OCI-LY7 (cell line): ENCODE measurements at regions of chr1 and their contacts with region 1.

Region 1: GRCh38 chr1:234326497-234327366 is 46.5 kb upstream of the COA6 start:
- DNase-seq: peak; percentile 58
- H3K4me3 ChIP-seq: no peak overlapping the region
- H3K27ac ChIP-seq: no peak overlapping the region
- H3K4me1 ChIP-seq: peaks cover 16% of the 10 kb centered on the region
- CTCF ChIP-seq: peak; percentile 89

Region 2: DNA sequence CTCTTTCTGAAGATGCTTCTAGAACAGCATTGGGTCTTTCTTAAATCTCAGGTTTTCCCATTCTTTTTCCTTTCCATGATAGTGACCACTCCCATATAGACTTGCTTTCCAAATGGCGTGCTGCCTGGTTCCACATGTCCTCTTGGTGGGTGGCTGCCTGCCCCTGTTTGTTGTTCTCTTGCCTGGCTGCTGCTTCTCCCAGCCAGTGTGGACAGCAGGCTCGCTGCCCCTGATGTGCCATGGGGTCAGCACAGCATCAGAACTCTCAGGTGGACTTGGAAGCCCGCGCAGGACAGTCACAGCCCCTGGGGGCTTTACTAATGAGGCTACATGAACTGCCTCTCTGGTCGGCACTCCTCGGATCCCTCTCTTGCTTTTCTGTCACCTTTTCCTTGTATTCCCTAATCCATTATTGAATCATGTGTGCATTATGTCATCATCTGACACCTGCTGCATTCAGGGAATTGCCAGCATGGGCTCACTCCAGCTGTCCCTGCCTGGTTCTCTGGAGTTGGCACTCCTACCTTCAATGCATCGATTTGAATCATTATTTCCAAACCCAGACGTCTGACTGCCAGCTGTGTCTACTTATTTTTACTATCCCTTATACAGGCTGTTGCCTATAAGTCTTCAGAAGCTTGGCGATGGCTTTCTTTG is 53.9 kb before region 1 on chr1:
- CTCF ChIA-PET with region 1: no interaction called
- POLR2A ChIA-PET with region 1: no interaction called
- intact Hi-C with region 1: no loop called
- DNase-seq: no peak
- H3K4me3 ChIP-seq: no peak overlapping the region
- H3K27ac ChIP-seq: no peak overlapping the region
- H3K4me1 ChIP-seq: no peaks in the 10 kb centered on the region
- CTCF ChIP-seq: no peak

Region 3: GRCh38 chr1:234427950-234428642 is 101.4 kb after region 1 on chr1:
- CTCF ChIA-PET with region 1: no interaction called
- POLR2A ChIA-PET with region 1: no interaction called
- intact Hi-C with region 1: loop called (anchors 10 kb)
- DNase-seq: no peak
- H3K4me3 ChIP-seq: no peak overlapping the region
- H3K27ac ChIP-seq: no peak overlapping the region
- H3K4me1 ChIP-seq: no peaks in the 10 kb centered on the region
- CTCF ChIP-seq: no peak